Activated CD4-positive, alpha-beta T cell treated with anti-CD3 and anti-CD28 coated beads for 36 hours (primary cell): ENCODE measurements at regions of chr9 and their contacts with region 1.

Region 1: DNA sequence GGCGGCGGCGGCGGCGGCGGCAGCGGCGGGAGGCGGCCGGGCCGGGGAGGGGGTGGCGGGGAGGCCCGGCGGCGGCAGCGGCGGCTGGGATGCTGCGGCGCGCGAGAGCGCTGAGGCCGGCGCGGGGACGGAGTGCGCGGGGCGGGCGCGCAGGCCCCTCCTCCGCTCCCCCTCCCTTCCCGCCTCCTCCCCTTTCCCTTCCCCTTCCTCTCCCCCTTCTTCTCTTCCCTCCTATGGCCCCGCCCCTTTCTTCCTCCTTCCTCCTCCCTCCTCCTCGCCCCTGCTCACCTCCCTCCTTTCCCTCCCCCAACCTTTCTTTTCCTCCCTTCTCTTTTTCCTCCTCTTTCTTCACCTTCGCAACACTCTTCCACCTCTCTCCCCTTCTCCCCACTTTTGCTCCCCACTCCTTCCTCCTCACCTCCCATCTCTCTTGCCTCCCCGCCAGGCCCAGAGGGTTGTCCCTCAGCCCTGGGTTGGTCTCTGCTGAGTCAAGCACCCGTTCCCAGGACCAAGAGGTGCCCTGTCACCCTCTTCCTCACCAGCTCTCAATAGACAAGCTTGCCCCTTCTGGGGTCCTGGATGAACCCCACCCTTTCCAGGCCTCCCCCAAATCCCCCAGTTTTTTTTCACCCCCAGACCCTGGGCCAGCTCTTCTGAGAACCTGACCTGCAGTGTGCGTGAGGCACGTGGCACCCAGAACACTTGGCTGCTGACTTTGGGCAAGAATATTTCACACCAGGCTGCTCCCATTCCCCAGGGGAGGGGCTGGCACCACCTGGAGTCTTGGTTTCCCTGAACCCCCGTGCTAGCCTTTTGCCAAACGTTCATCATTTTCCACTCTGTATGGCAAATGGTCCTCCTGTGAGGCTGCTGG is at the start of gene SEMA4D:
- DNase-seq: peak; percentile 85
- ATAC-seq: peak; percentile 38
- H3K4me3 Mint-ChIP-seq: peak within 1 kb of the TSS; percentile 89
- H3K27ac Mint-ChIP-seq: peak within 1 kb of the TSS; percentile 91
- H3K4me1 Mint-ChIP-seq: peaks cover 75% of the 10 kb centered on the region
- H3K27me3 Mint-ChIP-seq: no peaks in the 10 kb centered on the region
- total RNA-seq, gene SEMA4D: 215 to 226 TPM

Region 2: DNA sequence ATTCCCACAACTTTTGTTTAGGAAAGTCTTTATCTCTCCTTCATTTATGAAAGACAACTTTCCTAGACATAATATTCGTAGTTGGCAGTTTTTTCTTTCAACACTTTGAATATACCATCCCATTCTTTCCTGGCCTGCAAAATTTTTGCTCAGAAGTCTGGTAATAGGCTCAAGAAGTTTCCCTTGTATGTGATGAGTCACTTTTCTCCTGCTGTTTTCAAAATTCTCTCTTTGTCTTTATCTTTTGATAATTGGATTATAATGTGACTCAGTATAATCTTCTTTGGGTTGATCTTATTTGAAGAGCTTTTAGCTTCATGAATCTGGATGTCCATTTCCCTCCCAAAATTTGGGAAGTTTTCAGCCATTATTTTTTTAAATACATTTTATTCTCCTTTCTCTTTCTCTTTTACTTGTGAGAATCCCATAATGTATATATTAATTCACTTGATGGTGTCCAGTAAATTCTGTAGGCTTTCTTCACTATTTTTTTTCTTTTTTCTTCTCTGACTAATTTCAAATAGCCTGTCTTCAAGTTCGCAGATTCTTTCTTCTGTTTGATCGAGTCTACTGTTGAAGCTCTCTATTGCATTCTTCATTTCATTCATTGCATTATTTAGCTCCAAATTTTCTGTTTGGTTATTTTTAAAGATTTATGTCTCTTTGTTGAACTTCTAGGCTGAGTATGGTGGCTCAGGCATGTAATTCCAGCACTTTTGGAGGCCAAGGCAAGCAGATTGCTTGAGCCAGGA is 224.5 kb before region 1 on chr9:
- CTCF ChIA-PET with region 1: no interaction called
- POLR2A ChIA-PET with region 1: no interaction called
- intact Hi-C with region 1: no loop called
- DNase-seq: no peak
- ATAC-seq: no peak
- H3K4me3 Mint-ChIP-seq: no peak overlapping the region
- H3K27ac Mint-ChIP-seq: no peak overlapping the region
- H3K4me1 Mint-ChIP-seq: peaks cover 26% of the 10 kb centered on the region
- H3K27me3 Mint-ChIP-seq: peaks cover 4% of the 10 kb centered on the region

Region 3: GRCh38 chr9:89386797-89387196 is 111.4 kb before region 1 on chr9:
- CTCF ChIA-PET with region 1: no interaction called
- POLR2A ChIA-PET with region 1: no interaction called
- intact Hi-C with region 1: no loop called
- DNase-seq: no peak
- ATAC-seq: no peak
- H3K4me3 Mint-ChIP-seq: no peak overlapping the region
- H3K27ac Mint-ChIP-seq: peak overlapping the region; percentile 3
- H3K4me1 Mint-ChIP-seq: peaks cover 26% of the 10 kb centered on the region
- H3K27me3 Mint-ChIP-seq: no peaks in the 10 kb centered on the region

Region 4: DNA sequence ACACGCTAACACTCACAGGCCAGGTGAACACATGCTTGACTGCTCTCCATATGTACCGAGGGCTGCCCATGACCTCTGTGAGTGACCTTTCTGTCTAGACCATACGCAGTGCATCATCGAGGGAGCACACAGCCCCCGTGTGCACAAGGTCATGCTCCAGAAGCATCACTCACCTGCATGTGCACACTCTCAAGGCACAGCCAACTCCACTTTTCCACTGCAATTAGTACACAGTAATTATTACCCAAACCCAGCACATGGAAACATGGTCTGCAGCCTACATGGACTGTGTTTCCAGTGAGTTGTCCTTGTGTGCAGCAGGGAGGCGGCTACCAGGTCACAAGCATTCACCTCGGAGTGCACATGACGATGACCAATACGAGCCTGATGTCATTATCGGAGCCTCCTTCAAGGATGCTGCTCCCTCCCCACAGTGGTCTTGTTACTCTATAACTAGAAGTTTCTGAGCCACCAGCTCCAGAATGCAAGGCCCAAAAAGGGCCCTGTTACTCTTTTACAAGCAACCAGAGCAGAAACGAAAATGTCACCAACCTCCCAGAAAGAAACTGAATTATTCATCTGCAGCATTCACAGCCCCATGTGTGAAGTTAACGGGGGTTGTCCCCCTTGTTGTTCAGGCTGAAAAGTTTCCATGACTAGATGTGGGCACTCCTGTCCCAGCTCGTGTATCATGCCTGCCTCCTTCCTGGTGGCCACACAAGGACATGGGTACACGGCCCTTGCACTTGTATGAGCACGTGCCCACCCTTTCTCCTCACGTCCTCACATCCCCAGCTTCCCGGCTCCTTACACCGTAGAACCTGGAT is 31.6 kb before region 1 on chr9:
- CTCF ChIA-PET with region 1: interaction called, 4 read pairs
- POLR2A ChIA-PET with region 1: no interaction called
- intact Hi-C with region 1: loop called (anchors 1 to 2 kb)
- DNase-seq: peak; percentile 80
- ATAC-seq: peak; percentile 73
- H3K4me3 Mint-ChIP-seq: peak overlapping the region; percentile 62
- H3K27ac Mint-ChIP-seq: peak overlapping the region; percentile 95
- H3K4me1 Mint-ChIP-seq: peaks cover 96% of the 10 kb centered on the region
- H3K27me3 Mint-ChIP-seq: no peaks in the 10 kb centered on the region

Region 5: DNA sequence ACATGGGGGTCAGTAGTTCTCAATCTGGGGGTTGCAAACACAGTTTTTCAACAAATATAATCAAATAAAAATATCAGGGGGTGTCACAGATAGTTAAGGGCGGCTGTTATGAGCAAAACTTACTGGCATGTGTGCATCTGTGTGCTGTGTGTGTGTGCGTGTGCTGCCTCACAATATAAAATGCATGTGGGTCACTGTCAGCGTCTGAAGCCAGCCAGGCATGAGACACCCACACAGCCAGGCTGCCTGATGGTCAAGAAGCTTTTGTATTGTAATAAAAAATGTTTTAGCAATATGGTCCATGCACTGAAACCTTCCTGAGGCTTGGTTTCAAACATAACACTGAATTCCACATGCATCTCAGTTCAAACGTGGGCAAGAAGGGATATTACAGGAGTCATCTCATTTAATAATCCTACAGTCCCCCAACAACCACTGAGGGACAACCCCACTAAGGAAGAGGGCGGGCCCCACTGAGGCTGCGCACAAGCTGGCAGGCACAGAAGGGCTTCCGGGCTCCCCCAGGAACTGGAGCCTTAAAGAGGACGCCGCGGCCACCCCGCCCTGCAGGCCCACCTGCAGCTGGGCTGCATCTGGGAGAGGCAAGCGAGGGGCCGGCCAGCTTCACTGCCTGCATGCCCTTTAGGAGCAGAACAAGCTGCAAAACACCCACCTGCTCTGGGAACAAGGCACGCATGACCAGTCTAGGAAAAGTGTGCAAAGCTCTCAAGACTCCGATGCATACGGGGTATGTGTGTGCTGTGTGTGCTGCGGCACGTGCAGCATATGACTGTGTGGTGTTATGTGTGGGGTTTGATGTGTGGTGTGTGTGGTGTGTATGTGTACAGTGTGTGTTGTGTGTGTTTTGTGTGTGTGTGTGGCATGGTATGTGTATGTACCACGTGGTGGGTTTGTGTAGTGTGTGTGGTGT is 14.4 kb before region 1 on chr9:
- CTCF ChIA-PET with region 1: interaction called, 4 read pairs
- POLR2A ChIA-PET with region 1: interaction called, 3 read pairs
- intact Hi-C with region 1: loop called (anchors 1 to 2 kb)
- DNase-seq: peak; percentile 79
- ATAC-seq: peak; percentile 57
- H3K4me3 Mint-ChIP-seq: peak overlapping the region; percentile 79
- H3K27ac Mint-ChIP-seq: peak overlapping the region; percentile 93
- H3K4me1 Mint-ChIP-seq: peaks cover 91% of the 10 kb centered on the region
- H3K27me3 Mint-ChIP-seq: no peaks in the 10 kb centered on the region

Region 6: GRCh38 chr9:89522261-89522958 is 24.2 kb after region 1 on chr9:
- CTCF ChIA-PET with region 1: interaction called, 4 read pairs
- POLR2A ChIA-PET with region 1: no interaction called
- intact Hi-C with region 1: loop called (anchors 1 to 2 kb)
- DNase-seq: peak; percentile 86
- ATAC-seq: peak; percentile 90
- H3K4me3 Mint-ChIP-seq: peak overlapping the region; percentile 62
- H3K27ac Mint-ChIP-seq: peak overlapping the region; percentile 97
- H3K4me1 Mint-ChIP-seq: peaks cover 94% of the 10 kb centered on the region
- H3K27me3 Mint-ChIP-seq: no peaks in the 10 kb centered on the region

Region 7: DNA sequence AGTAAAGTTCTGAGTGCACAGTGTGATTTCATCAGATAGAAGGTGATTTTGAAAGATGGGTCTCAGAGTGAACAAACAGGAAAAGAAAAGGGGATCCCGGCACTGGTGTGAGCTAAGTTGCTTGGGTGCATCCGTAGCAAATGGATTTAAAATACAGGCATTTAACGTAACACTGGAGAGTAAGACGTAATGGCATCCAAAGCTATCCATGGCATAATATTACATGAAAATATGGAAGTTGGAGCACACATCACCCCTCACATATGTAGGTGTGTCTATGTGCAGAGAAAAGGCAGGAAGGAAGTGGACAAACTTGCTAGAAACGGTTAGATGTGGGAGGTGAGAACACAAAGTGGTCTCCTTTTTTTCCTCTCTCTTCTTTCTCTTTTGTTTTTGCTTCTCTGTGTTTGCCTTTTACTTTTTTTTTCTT is 37.9 kb after region 1 on chr9:
- CTCF ChIA-PET with region 1: no interaction called
- POLR2A ChIA-PET with region 1: no interaction called
- intact Hi-C with region 1: loop called in 1 of 2 experiments (anchors 2 kb)
- DNase-seq: no peak
- ATAC-seq: peak; percentile 68
- H3K4me3 Mint-ChIP-seq: peak overlapping the region; percentile 57
- H3K27ac Mint-ChIP-seq: peak overlapping the region; percentile 97
- H3K4me1 Mint-ChIP-seq: peaks cover 88% of the 10 kb centered on the region
- H3K27me3 Mint-ChIP-seq: no peaks in the 10 kb centered on the region